Activated B cell treated with CpG ODN at 0.5 μM for 24 hours (primary cell): ENCODE measurements at regions of chr3 and their contacts with region 1.

Region 1: GRCh38 chr3:188664795-188665194 is 507.0 kb upstream of the TPRG1 start:
- DNase-seq: no peak
- ATAC-seq: no peak
- H3K4me3 Mint-ChIP-seq: no peak overlapping the region
- H3K27ac Mint-ChIP-seq: no peak overlapping the region
- H3K4me1 Mint-ChIP-seq: no peaks in the 10 kb centered on the region
- H3K27me3 Mint-ChIP-seq: no peaks in the 10 kb centered on the region
- CTCF ChIP-seq: no peak

Region 2: DNA sequence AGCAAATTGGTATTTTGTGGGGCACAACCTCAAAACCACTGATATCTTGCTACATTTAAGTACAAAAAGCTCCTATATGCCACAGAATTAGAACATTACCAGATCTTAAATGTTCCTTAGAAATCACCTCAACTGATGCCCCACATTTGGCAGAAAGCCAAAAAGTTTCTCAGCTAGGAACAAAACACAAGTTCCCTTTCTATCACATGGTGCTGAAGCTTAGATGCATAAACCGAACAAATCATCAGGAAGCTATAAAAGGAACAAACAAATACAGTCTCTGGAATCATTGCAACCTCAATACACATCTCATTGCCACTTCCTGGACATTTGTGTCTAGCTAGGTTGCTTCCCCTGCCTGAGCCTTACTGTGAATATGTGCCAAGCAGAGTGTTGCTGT is 18.2 kb before region 1 on chr3:
- CTCF ChIA-PET with region 1: no interaction called
- POLR2A ChIA-PET with region 1: no interaction called
- intact Hi-C with region 1: loop called (anchors 2 kb)
- DNase-seq: no peak
- ATAC-seq: no peak
- H3K4me3 Mint-ChIP-seq: no peak overlapping the region
- H3K27ac Mint-ChIP-seq: no peak overlapping the region
- H3K4me1 Mint-ChIP-seq: peaks cover 14% of the 10 kb centered on the region
- H3K27me3 Mint-ChIP-seq: no peaks in the 10 kb centered on the region
- CTCF ChIP-seq: no peak